ENCODE measurements at regions of chr2 and their contacts with region 1.

Region 1: DNA sequence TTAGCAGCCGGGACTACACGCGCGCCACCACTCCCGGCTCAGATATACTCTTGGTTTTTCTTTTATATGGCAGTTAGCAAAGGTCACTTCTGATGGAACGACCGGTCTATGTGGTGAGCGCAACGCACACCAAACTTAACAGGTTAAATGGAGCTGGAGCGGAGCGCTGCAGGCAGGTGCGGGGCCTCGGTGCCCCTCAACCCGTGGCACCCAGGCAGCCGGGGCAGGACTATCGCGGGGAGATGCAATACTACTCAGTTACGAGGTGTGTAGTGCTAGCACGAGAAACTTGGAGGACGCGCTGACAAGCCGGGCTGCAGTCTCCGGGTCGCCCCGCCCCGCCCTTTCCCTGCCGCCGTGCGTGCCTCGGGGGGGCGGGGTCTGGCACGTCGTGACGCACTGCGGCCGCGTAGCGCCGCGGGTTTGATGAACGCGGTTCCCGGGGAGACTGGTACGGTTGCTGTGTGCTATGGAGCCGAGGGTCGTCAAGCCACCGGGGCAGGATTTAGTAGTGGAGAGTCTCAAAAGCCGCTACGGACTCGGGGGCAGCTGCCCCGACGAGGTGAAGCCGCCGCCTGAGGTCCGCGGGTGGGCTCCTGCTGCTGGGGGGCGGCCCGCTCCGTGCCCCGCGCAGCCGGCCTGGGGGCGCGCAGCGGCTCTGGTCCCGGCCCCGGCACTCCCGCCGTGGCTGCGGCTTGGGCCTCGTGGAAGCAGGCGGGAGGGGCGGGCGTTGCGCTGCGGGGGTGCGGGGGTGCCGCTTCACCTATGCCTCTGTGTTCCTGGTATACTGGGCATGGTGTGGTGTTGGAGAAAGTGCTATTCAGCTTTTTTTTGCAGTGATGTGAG is at the start of gene CCDC138:
- DNase-seq: peak; percentile 91
- H3K4me3 Mint-ChIP-seq: peak within 1 kb of the TSS; percentile 100
- H3K27ac Mint-ChIP-seq: peak within 1 kb of the TSS; percentile 100
- H3K4me1 Mint-ChIP-seq: peaks cover 24% of the 10 kb centered on the region
- H3K27me3 Mint-ChIP-seq: no peaks in the 10 kb centered on the region
- total RNA-seq, gene CCDC138: 20.0 and 23.4 TPM in 2 replicates

Region 2: DNA sequence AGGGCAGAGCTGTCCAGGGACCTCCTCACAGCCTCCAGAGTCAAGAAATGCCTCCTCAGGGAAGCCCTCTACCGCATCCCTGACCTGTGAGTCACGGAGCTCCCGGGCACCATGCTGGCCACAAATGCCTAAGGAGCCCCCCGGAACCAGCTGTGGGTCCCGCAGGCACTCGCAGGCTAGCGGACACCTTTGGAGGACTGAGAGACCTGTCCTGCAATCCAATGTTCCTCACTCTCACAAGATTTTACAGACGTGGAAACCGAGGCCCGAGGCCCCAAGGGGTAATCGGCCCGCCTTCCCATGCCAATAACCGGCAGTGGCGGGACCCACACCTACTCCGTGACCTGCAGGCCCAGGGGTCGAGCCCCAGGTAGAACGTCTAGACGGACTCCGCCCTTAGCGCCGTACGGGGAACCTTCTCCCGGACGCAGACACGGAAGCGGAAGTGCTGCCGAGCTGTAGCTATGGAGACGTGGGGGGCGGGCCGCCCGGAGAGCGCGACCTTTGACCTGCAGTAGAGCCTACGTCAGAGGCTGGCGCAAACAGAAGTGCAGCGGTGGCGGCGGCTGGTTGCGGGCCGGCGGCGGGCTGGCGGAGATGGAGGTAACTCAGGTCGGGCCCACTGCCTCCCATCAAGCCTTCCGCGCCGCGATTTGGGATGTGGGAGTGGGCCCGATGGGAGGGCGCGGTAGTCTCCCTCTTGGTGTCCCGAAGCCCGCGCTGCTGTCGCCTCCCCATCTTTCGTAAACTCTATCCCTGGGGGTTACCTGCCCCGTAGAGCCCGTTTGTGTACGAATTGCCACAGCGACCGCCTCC is 337.7 kb before region 1 on chr2 and contains the start of gene GCC2:
- intact Hi-C with region 1: loop called (anchors 2 kb)
- DNase-seq: peak; percentile 95
- H3K4me3 Mint-ChIP-seq: peak within 1 kb of the TSS; percentile 91
- H3K27ac Mint-ChIP-seq: peak within 1 kb of the TSS; percentile 85
- H3K4me1 Mint-ChIP-seq: peaks cover 44% of the 10 kb centered on the region
- H3K27me3 Mint-ChIP-seq: no peaks in the 10 kb centered on the region
- total RNA-seq, gene GCC2: 43.7 and 44.1 TPM in 2 replicates

Region 3: DNA sequence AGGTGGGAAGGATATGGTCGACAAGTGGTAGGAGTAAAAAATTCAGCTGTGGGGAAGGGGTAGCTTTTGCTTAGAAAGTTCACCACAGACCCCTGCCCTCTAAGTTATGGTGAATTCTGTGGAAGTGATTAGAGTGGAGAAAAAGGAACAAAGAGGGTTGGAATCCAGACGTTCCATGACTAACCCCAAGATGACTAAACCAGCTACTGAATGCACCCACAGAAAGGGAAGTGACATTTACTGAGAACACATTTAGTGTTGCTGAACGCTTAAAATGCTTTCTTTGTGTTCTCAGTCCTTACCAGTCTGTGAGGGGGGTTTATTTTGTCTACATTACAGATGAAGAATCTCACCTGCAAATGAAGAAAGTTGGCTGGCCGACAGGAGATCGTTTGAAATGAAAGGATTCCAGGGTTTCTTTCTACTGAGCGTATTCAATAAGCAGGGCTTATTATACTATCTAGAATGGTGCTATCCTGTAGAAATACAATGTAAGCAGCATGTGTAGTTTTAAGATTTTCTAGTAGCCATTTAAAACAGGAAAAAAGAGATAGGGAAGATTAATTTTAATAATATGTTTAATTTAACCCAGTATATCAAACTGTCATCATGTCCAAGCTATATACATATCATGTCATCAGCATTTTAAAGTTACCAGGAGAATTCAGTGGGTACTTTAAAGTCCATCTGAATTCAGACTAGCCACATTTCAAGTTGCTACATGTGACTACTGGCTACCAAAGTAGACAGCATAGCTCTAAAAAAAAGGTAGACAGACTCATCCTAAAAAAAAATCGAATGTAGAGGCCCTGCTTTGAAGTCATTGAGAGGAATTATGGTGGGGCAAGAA is 192.2 kb before region 1 on chr2:
- intact Hi-C with region 1: loop called (anchors 2 kb)
- DNase-seq: no peak
- H3K4me3 Mint-ChIP-seq: peak overlapping the region; percentile 72
- H3K27ac Mint-ChIP-seq: peak overlapping the region; percentile 92
- H3K4me1 Mint-ChIP-seq: peaks cover 63% of the 10 kb centered on the region
- H3K27me3 Mint-ChIP-seq: no peaks in the 10 kb centered on the region

Region 4: DNA sequence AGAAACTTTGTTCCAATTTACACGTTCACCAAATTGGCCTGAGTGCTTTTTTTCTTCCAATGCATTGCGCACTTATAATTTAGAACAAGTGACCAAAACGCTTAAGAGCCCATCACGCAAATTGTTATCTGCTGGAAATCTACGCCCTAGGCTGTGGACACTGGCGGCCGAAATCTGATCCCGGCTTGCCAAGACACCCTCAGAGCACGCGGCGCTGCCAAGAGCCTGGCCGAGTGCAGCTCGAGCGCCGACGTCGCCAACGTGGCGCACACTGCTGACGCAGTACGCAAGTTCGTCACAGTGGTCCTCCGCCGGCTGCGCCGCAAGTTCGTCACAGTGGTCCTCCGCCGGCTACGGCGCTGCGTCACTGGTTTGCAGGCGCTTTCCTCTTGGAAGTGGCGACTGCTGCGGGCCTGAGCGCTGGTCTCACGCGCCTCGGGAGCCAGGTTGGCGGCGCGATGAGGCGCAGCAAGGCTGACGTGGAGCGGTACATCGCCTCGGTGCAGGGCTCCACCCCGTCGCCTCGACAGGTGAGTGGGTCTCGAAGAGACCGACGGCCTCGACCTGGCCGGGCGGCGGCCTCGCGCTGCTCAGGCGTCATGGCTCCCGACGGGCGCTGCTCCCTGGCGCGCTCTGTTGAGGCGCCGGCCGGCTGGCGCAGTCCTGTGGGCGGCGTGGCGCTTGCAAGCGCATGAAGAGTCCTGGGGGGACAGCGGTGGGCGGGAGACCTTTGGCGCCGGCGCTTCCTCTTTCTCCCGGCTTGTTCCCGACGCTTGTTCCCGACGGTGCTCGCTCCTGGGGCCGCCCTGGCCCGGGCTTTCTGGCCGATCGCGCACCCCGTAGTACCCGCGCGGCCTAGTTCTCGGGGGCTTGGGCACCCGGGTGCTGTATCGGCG is 67.2 kb before region 1 on chr2 and contains the start of gene RANBP2:
- intact Hi-C with region 1: loop called (anchors 1 kb)
- DNase-seq: peak; percentile 92
- H3K4me3 Mint-ChIP-seq: peak within 1 kb of the TSS; percentile 94
- H3K27ac Mint-ChIP-seq: peak within 1 kb of the TSS; percentile 99
- H3K4me1 Mint-ChIP-seq: peaks cover 16% of the 10 kb centered on the region
- H3K27me3 Mint-ChIP-seq: no peaks in the 10 kb centered on the region
- total RNA-seq, gene RANBP2: 68.0 and 74.1 TPM in 2 replicates

Region 5: DNA sequence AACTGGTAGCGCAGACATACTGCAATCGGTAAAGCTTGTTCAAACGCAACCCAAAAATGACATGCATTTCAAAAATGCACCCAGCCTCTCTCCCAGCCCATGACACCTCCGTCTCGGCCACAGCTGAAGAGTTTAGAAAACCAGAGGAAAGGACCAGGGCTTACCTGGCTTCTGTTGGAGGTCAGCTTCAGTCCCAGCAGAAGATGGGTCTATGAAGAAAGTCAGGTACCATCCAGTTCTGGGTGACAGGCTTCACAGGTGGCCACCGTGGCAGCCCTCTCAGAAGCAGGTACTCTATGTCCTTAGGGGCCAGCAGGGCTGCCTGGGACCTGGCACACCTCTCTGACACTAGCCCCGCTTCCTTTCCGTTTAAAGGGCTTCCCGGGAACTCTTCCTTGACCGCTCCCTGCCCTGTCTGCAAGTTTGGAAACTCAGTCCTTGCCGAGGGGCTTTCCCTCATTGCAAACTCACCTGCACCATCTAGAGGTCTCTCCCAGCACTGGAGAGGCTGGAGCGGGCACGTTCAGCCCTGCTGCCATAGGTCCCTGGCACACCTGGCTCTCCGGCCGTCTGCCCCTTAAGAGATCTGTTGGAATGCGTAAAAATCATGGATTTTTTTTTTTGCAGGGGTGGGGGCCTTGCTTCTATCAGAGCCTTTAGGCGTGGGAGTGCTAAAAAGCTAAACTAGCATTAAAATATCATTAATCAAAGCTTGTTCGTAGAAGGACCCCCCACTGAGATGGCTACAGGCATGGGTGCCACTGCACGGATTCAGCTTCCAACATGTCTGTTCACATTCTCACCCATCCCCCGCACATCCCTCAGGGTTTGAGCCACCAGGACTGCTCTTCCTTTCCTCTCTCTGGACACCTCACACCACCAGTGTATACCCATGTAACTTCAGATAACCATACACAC is 202.5 kb after region 1 on chr2 and contains the start of gene EDAR:
- intact Hi-C with region 1: loop called (anchors 1 kb)
- DNase-seq: no peak
- H3K4me3 Mint-ChIP-seq: peak within 1 kb of the TSS; percentile 72
- H3K27ac Mint-ChIP-seq: no peak within 1 kb of the TSS
- H3K4me1 Mint-ChIP-seq: peaks cover 31% of the 10 kb centered on the region
- H3K27me3 Mint-ChIP-seq: peaks cover 7% of the 10 kb centered on the region
- total RNA-seq, gene EDAR: 1.9 and 2.3 TPM in 2 replicates